Mammary epithelial cell (primary cell): ENCODE measurements at regions of chr10 and their contacts with region 1.

Region 1: GRCh38 chr10:117363028-117363427 is 12.2 kb downstream of the PDZD8 start:
- DNase-seq: peak; percentile 75
- H3K4me3 ChIP-seq: peak overlapping the region in 1 of 3 experiments; percentile 32
- H3K27ac ChIP-seq: peak overlapping the region; percentile 88
- H3K4me1 ChIP-seq: peaks cover 66% of the 10 kb centered on the region
- H3K27me3 ChIP-seq: no peaks in the 10 kb centered on the region
- CTCF ChIP-seq: no peak

Region 2: GRCh38 chr10:117152668-117153067 is 210.4 kb before region 1 on chr10:
- CTCF ChIA-PET with region 1: no interaction called
- dilution Hi-C with region 1: no loop called
- in situ Hi-C with region 1: no loop called
- intact Hi-C with region 1: no loop called
- DNase-seq: no peak
- H3K4me3 ChIP-seq: no peak overlapping the region
- H3K27ac ChIP-seq: no peak overlapping the region
- H3K4me1 ChIP-seq: no peaks in the 10 kb centered on the region
- H3K27me3 ChIP-seq: peaks cover 13% of the 10 kb centered on the region
- CTCF ChIP-seq: no peak

Region 3: GRCh38 chr10:117442944-117443685 is 80.1 kb after region 1 on chr10:
- CTCF ChIA-PET with region 1: no interaction called
- dilution Hi-C with region 1: loop called (anchors 5 kb)
- in situ Hi-C with region 1: no loop called
- intact Hi-C with region 1: no loop called
- DNase-seq: peak; percentile 78
- H3K4me3 ChIP-seq: no peak overlapping the region
- H3K27ac ChIP-seq: peak overlapping the region; percentile 62
- H3K4me1 ChIP-seq: peaks cover 42% of the 10 kb centered on the region
- H3K27me3 ChIP-seq: no peaks in the 10 kb centered on the region
- CTCF ChIP-seq: peak; percentile 79 to 84

Region 4: DNA sequence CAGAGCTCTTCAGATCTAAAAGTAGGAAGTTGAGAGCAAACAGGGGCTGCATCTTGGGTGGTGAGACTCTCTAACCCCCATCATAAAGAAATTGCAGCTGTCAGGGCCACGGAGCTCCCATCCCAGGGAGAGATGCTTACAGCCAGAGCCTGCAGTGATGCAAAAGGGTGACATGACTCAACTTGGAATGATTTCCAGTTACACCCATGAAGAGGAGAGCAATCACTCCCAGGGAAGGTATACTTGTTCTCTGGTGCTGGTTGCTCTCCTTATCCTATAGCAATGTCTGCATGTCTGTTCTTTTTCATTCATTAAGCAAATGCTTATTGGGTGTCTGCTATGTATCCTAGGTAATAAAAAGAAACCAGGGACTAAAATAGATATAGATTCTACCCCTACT is 455.7 kb after region 1 on chr10:
- CTCF ChIA-PET with region 1: no interaction called
- dilution Hi-C with region 1: no loop called
- in situ Hi-C with region 1: no loop called
- intact Hi-C with region 1: no loop called
- DNase-seq: peak; percentile 5
- H3K4me3 ChIP-seq: no peak overlapping the region
- H3K27ac ChIP-seq: no peak overlapping the region
- H3K4me1 ChIP-seq: no peaks in the 10 kb centered on the region
- H3K27me3 ChIP-seq: no peaks in the 10 kb centered on the region
- CTCF ChIP-seq: no peak